Mammary epithelial cell (primary cell): ENCODE measurements at regions of chr9 and their contacts with region 1.

Region 1: DNA sequence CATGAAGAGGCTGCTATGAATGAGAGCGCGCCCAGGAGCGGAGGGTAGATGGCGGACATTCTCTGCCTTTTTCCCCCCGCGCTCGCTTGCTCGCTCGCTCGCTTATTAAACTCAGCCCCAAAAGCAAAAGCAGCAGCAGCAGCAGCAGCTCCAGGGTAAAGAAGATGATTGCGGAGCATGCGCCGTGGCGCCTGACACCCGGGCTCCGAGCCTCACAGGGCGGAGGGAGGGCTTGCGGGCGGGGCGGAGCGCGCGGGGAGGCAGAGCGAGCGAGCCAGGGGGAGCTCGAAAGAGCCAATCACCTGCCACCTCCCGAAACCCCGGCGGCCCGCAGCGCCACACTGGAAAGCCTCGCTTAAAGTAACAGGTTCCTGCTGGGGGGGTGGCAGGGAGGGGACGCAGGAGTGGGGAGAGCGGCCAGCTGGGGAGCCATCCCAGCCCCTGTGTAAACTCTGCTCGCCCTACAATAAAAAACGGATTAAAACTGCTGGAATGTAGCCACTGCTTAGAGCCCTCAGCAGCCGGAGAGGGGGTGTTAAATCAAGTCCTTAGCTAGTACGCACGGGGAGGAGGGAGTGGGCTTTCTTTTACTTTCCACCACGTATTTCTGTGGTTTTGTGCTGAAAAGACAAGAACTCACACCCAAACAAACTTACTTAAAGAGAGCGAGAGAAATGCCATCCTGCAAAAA is at the start of gene MLLT3:
- DNase-seq: peak; percentile 94
- H3K4me3 ChIP-seq: peak within 1 kb of the TSS; percentile 81 to 97 (median 84)
- H3K27ac ChIP-seq: peak within 1 kb of the TSS; percentile 29
- H3K4me1 ChIP-seq: peaks cover 33% of the 10 kb centered on the region
- H3K27me3 ChIP-seq: no peaks in the 10 kb centered on the region
- CTCF ChIP-seq: no peak
- total RNA-seq, gene MLLT3: 8.8 to 11.7 TPM

Region 2: GRCh38 chr9:19493174-19493811 is 1129.2 kb before region 1 on chr9:
- CTCF ChIA-PET with region 1: no interaction called
- dilution Hi-C with region 1: no loop called
- in situ Hi-C with region 1: loop called in 1 of 2 experiments (anchors 25 kb)
- intact Hi-C with region 1: no loop called
- DNase-seq: peak; percentile 52
- H3K4me3 ChIP-seq: peak overlapping the region; percentile 4 to 37 (median 32)
- H3K27ac ChIP-seq: no peak overlapping the region
- H3K4me1 ChIP-seq: peaks cover 4% of the 10 kb centered on the region
- H3K27me3 ChIP-seq: no peaks in the 10 kb centered on the region
- CTCF ChIP-seq: peak; percentile 77 to 83

Region 3: DNA sequence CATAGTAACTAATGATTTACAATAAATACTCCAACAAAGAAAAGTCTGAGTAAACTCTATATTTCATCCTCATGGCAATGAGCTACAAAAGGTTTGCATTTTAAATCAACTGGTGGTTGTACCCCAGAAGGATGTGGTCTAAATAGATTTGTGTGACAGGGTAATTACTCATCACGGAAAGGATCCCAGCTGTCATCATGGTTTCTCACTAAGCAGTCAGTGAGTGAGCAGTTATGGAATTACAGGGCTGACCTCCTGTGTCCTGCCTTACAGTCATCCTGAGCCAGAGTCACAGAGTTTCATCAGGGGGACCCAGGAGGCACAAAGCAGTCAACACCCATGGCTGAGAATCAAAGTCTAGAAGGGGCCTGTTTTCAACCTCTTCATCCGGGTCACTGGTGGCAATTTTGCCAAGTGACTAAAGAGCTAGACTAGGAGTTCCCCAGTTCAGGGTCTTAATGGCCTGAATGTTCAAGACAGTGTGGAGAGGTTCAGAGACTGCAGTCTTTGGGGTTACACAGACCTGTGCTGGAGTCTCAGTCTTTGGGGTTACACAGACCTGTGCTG is 622.9 kb before region 1 on chr9:
- CTCF ChIA-PET with region 1: no interaction called
- dilution Hi-C with region 1: no loop called
- in situ Hi-C with region 1: no loop called
- intact Hi-C with region 1: loop called (anchors 5 kb)
- DNase-seq: peak; percentile 96
- H3K4me3 ChIP-seq: no peak overlapping the region
- H3K27ac ChIP-seq: peak overlapping the region; percentile 90
- H3K4me1 ChIP-seq: peaks cover 42% of the 10 kb centered on the region
- H3K27me3 ChIP-seq: no peaks in the 10 kb centered on the region
- CTCF ChIP-seq: no peak

Region 4: GRCh38 chr9:20356403-20357035 is 266.0 kb before region 1 on chr9:
- CTCF ChIA-PET with region 1: interaction called, 14 read pairs
- dilution Hi-C with region 1: no loop called
- in situ Hi-C with region 1: loop called in 1 of 2 experiments (anchors 10 kb)
- intact Hi-C with region 1: loop called (anchors 1 kb)
- DNase-seq: peak; percentile 70
- H3K4me3 ChIP-seq: no peak overlapping the region
- H3K27ac ChIP-seq: no peak overlapping the region
- H3K4me1 ChIP-seq: peaks cover 9% of the 10 kb centered on the region
- H3K27me3 ChIP-seq: no peaks in the 10 kb centered on the region
- CTCF ChIP-seq: peak; percentile 85 to 89

Region 5: DNA sequence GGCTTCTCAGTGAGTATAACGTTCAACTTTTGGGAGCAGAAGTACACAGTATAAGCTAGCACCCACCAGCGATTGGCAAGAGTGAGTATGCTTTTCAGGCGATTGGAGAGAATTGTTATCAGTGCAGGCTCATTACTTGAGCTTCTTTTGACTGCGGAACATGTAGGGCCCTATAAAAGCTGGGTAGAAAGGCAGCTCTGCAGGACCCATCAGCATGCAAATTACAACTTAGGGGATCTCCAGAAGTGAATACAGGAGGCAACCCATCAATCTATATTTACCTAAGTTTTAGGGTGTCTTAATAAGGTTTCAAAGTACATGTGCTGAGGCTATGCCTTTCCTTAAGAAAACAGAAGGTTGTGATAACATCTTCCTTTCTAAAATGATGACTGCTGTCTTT is 225.1 kb before region 1 on chr9:
- CTCF ChIA-PET with region 1: no interaction called
- dilution Hi-C with region 1: no loop called
- in situ Hi-C with region 1: no loop called
- intact Hi-C with region 1: no loop called
- DNase-seq: no peak
- H3K4me3 ChIP-seq: no peak overlapping the region
- H3K27ac ChIP-seq: no peak overlapping the region
- H3K4me1 ChIP-seq: no peaks in the 10 kb centered on the region
- H3K27me3 ChIP-seq: no peaks in the 10 kb centered on the region
- CTCF ChIP-seq: no peak

Region 6: GRCh38 chr9:20508242-20508641 is 114.2 kb before region 1 on chr9:
- CTCF ChIA-PET with region 1: no interaction called
- dilution Hi-C with region 1: no loop called
- in situ Hi-C with region 1: no loop called
- intact Hi-C with region 1: no loop called
- DNase-seq: no peak
- H3K4me3 ChIP-seq: no peak overlapping the region
- H3K27ac ChIP-seq: no peak overlapping the region
- H3K4me1 ChIP-seq: peaks cover 8% of the 10 kb centered on the region
- H3K27me3 ChIP-seq: no peaks in the 10 kb centered on the region
- CTCF ChIP-seq: no peak

Region 7: GRCh38 chr9:20552874-20553575 is 69.5 kb before region 1 on chr9:
- CTCF ChIA-PET with region 1: interaction called, 4 read pairs
- dilution Hi-C with region 1: no loop called
- in situ Hi-C with region 1: no loop called
- intact Hi-C with region 1: loop called (anchors 1 kb)
- DNase-seq: no peak
- H3K4me3 ChIP-seq: no peak overlapping the region
- H3K27ac ChIP-seq: no peak overlapping the region
- H3K4me1 ChIP-seq: peaks cover 15% of the 10 kb centered on the region
- H3K27me3 ChIP-seq: no peaks in the 10 kb centered on the region
- CTCF ChIP-seq: peak in 1 of 2 donors; percentile 23

Region 8: DNA sequence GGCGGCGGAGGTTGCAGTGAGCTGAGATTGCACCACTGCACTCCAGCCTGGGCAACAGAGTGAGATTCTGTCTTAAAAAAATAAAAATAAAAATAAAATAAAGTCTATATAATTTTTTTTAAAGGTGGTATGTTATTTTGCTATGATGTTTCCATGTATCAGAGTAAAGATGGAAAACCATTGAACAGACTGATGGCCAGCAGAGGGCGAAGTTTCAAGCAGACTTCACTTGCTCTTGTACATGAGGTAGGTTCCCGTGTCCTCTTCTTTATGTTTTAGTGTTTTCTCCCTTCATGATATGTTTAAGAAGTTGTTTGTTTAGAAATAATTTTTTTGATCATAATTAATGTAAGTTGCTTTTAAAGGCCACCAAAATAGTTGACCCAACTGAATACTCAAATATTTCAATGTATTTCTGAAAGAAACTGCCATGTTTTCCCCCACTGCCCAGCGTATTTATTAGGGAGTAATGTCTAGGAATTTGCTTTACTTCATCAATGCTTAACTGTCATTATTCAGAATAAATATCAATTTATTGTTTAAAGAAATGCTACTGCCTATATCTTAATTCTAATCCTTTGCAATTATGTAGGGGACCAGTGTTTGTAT is 262.6 kb after region 1 on chr9:
- CTCF ChIA-PET with region 1: no interaction called
- dilution Hi-C with region 1: no loop called
- in situ Hi-C with region 1: no loop called
- intact Hi-C with region 1: loop called (anchors 1 kb)
- DNase-seq: peak; percentile 37
- H3K4me3 ChIP-seq: no peak overlapping the region
- H3K27ac ChIP-seq: no peak overlapping the region
- H3K4me1 ChIP-seq: no peaks in the 10 kb centered on the region
- H3K27me3 ChIP-seq: no peaks in the 10 kb centered on the region
- CTCF ChIP-seq: peak; percentile 57 to 73

Region 9: GRCh38 chr9:21070171-21070571 is 447.7 kb after region 1 on chr9:
- CTCF ChIA-PET with region 1: no interaction called
- dilution Hi-C with region 1: no loop called
- in situ Hi-C with region 1: no loop called
- intact Hi-C with region 1: no loop called
- DNase-seq: peak; percentile 74
- H3K4me3 ChIP-seq: no peak overlapping the region
- H3K27ac ChIP-seq: no peak overlapping the region
- H3K4me1 ChIP-seq: peaks cover 8% of the 10 kb centered on the region
- H3K27me3 ChIP-seq: peaks cover 4% of the 10 kb centered on the region
- CTCF ChIP-seq: peak; percentile 28 to 30

Region 10: GRCh38 chr9:21102305-21102704 is 479.8 kb after region 1 on chr9:
- CTCF ChIA-PET with region 1: no interaction called
- dilution Hi-C with region 1: no loop called
- in situ Hi-C with region 1: loop called (anchors 10 to 25 kb)
- intact Hi-C with region 1: no loop called
- DNase-seq: no peak
- H3K4me3 ChIP-seq: no peak overlapping the region
- H3K27ac ChIP-seq: no peak overlapping the region
- H3K4me1 ChIP-seq: no peaks in the 10 kb centered on the region
- H3K27me3 ChIP-seq: no peaks in the 10 kb centered on the region
- CTCF ChIP-seq: no peak